ENCODE measurements at regions of chr1 and their contacts with region 1.

Region 1: GRCh38 chr1:209707308-209707707 is 2.7 kb downstream of the HSD11B1 start:
- DNase-seq: peak; percentile 29
- ATAC-seq: no peak
- H3K4me3 ChIP-seq: no peak overlapping the region
- H3K27ac ChIP-seq: no peak overlapping the region
- H3K4me1 ChIP-seq: no peaks in the 10 kb centered on the region
- H3K27me3 ChIP-seq: no peaks in the 10 kb centered on the region
- CTCF ChIP-seq: no peak
- POLR2A ChIP-seq: no peak
- RAD21 ChIP-seq: no peak

Region 2: GRCh38 chr1:209736490-209737117 is 29.3 kb after region 1 on chr1:
- CTCF ChIA-PET with region 1: no interaction called
- POLR2A ChIA-PET with region 1: no interaction called
- dilution Hi-C with region 1: no loop called
- in situ Hi-C with region 1: no loop called
- intact Hi-C with region 1: loop called (anchors 2 kb)
- DNase-seq: no peak
- ATAC-seq: no peak
- H3K4me3 ChIP-seq: no peak overlapping the region
- H3K27ac ChIP-seq: no peak overlapping the region
- H3K4me1 ChIP-seq: peaks cover 1% of the 10 kb centered on the region; the same call in 1 of the 2 replicates
- H3K27me3 ChIP-seq: peaks cover 4% of the 10 kb centered on the region
- CTCF ChIP-seq: no peak
- POLR2A ChIP-seq: no peak
- RAD21 ChIP-seq: no peak